ENCODE measurements at regions of chr14 and their contacts with region 1.

Region 1: GRCh38 chr14:52131640-52132320 is 62.9 kb upstream of the NID2 start:
- DNase-seq: peak; percentile 79 to 82 (median 81)
- ATAC-seq: peak; percentile 93 to 95
- H3K4me3 ChIP-seq: no peak overlapping the region
- H3K27ac ChIP-seq: no peak overlapping the region
- H3K4me1 ChIP-seq: no peaks in the 10 kb centered on the region
- H3K27me3 ChIP-seq: no peaks in the 10 kb centered on the region

Region 2: DNA sequence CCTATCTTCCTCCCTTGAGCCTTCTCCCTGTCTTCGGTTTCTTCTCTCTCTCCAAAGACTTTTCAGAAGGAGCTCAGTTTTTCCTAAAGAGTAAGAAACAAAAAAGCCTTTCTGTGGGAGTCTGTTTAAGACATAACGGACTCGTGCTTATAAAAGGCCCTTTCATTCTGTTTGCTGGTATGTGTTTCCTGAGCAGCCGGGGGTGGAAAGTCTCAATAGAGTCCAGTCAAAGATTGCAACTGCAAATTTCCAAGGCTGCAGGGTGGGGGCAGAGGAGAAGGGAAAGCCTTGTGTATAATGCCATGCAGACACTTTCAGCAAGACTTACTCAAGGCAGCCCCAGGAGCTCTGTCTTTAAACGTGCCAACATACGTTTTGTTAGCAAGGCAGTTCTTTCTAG is 209.2 kb before region 1 on chr14:
- intact Hi-C with region 1: no loop called
- DNase-seq: peak in 2 of 3 donors; percentile 41 to 60
- ATAC-seq: peak; percentile 77 to 80
- H3K4me3 ChIP-seq: peak overlapping the region; percentile 2
- H3K27ac ChIP-seq: peak overlapping the region; percentile 83
- H3K4me1 ChIP-seq: peaks cover 1% of the 10 kb centered on the region
- H3K27me3 ChIP-seq: no peaks in the 10 kb centered on the region

Region 3: GRCh38 chr14:51996148-51996746 is 135.5 kb before region 1 on chr14:
- intact Hi-C with region 1: loop called (anchors 2 to 5 kb)
- DNase-seq: no peak
- ATAC-seq: no peak
- H3K4me3 ChIP-seq: no peak overlapping the region
- H3K27ac ChIP-seq: no peak overlapping the region
- H3K4me1 ChIP-seq: no peaks in the 10 kb centered on the region
- H3K27me3 ChIP-seq: no peaks in the 10 kb centered on the region

Region 4: DNA sequence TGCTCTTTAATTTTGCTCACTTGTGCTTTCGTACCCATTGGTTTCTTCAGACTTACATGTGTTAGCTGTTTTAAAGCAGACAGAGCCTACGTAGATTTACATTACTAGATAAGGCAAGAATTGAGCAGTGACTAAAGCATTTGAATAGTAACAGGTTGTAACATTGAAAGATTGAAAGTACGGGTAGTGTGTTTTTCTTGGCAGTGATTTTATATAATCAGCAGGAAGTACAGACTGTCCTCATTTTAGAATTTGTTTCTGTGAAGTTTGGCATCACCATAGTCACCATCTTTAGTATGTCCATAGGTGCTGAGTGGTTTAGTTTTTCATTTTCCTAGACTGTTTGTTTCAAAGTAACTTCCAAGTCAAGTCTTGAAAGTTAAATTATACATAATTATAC is 128.5 kb before region 1 on chr14:
- intact Hi-C with region 1: loop called in 3 of 4 experiments (anchors 5 kb)
- DNase-seq: no peak
- ATAC-seq: peak; percentile 85 to 86
- H3K4me3 ChIP-seq: no peak overlapping the region
- H3K27ac ChIP-seq: no peak overlapping the region
- H3K4me1 ChIP-seq: peaks cover 8% of the 10 kb centered on the region
- H3K27me3 ChIP-seq: no peaks in the 10 kb centered on the region

Region 5: DNA sequence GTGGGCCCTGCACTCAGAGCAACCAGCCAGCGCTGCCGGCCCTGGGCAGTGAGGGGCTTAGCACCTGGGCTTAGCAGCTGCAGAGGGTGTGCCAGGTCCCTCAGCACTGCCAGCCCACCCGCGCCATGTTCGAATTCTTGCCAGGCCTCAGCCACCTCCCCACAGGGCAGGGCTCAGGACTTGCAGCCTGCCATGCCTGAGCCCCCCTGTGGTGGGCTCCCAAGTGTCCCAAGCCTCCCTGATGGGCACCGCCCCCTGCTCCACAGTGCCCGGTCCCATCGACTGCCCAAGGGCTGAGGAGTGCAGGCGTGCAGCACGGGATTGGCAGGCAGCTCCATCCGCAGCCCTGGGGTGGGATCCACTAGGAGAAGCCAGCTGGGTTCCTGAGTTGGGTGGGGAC is 35.0 kb after region 1 on chr14:
- intact Hi-C with region 1: no loop called
- DNase-seq: no peak
- ATAC-seq: no peak
- H3K4me3 ChIP-seq: no peak overlapping the region
- H3K27ac ChIP-seq: no peak overlapping the region
- H3K4me1 ChIP-seq: no peaks in the 10 kb centered on the region
- H3K27me3 ChIP-seq: no peaks in the 10 kb centered on the region

Region 6: GRCh38 chr14:52279405-52279804 is 147.6 kb after region 1 on chr14:
- intact Hi-C with region 1: no loop called
- DNase-seq: no peak
- ATAC-seq: peak; percentile 59 to 96
- H3K4me3 ChIP-seq: no peak overlapping the region
- H3K27ac ChIP-seq: no peak overlapping the region
- H3K4me1 ChIP-seq: no peaks in the 10 kb centered on the region
- H3K27me3 ChIP-seq: no peaks in the 10 kb centered on the region